ENCODE measurements at regions of chr20 and their contacts with region 1.

Region 1: DNA sequence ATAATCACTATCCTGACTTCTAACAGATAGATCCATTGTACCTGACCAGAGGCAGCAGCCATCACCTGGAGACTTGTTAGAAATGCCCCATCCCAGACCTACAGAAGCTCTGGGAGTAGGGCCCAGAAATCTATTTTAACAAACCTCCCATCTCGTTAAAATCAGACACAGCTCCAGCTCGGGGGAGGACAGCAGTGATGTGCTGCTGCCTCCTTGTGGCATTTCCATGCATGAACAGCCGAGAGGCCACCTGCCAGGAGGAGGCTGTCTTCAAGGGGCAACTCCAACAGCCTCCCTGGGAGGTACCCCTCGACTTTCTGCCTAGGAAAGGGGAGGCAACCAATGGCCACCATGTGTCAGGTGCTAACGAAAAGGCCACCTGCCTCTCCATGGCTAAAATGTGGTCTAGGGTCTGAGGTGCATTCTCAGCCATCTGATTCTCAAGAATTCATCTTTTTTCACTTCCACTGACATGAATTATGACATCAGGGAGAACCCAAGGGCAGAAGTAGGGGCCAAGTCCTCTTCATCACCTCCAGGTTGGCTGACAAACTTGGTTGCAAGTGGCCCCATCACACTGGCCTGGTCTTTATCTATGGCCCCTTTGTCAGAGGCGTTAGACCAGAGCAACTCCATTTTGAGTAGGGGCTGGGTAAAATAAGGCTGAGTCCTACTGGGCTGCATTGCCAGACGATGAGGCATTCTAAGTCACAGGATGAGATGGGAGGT is 12.2 kb upstream of the KCNK15 start:
- DNase-seq: no peak
- H3K4me3 ChIP-seq: no peak overlapping the region
- H3K27me3 ChIP-seq: no peaks in the 10 kb centered on the region
- CTCF ChIP-seq: peak; percentile 88

Region 2: GRCh38 chr20:44660581-44660980 is 72.9 kb before region 1 on chr20:
- CTCF ChIA-PET with region 1: no interaction called
- POLR2A ChIA-PET with region 1: no interaction called
- DNase-seq: no peak
- H3K4me3 ChIP-seq: no peak overlapping the region
- H3K27me3 ChIP-seq: peaks cover 5% of the 10 kb centered on the region
- CTCF ChIP-seq: no peak

Region 3: DNA sequence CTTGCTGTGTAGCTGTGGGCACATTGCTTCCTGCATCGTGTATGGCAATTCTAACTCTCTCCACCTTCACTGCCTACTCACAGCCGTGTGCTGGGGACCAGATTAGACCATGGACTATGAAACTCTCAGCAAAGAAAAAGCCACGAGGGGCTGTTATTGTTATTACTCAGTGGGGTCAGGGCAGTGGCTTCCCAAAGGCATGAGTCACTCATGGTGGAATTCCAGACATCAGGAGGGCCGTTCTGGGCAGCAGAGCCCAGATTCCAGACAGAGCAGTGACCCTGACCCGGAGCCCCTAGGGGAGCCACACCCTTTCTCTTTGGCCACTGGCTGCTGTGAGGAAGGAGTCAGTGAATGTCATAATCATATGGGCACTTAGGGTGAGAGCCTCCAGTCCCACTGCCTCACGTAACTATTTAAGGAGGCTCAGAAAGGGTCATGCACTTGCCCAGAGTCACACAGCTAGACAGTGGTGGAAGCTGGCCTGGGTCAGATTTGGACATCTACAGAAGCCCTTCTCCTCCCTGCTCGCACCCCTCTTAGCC is 40.5 kb before region 1 on chr20:
- CTCF ChIA-PET with region 1: interaction called, 269 read pairs
- POLR2A ChIA-PET with region 1: no interaction called
- DNase-seq: peak; percentile 89
- H3K4me3 ChIP-seq: no peak overlapping the region
- H3K27me3 ChIP-seq: no peaks in the 10 kb centered on the region
- CTCF ChIP-seq: no peak

Region 4: GRCh38 chr20:44702776-44703175 is 30.7 kb before region 1 on chr20:
- CTCF ChIA-PET with region 1: interaction called, 104 read pairs
- POLR2A ChIA-PET with region 1: no interaction called
- DNase-seq: peak; percentile 57
- H3K4me3 ChIP-seq: no peak overlapping the region
- H3K27me3 ChIP-seq: no peaks in the 10 kb centered on the region
- CTCF ChIP-seq: no peak

Region 5: GRCh38 chr20:44720617-44720993 is 12.9 kb before region 1 on chr20:
- CTCF ChIA-PET with region 1: interaction called, 10 read pairs
- POLR2A ChIA-PET with region 1: no interaction called
- DNase-seq: peak; percentile 35
- H3K4me3 ChIP-seq: no peak overlapping the region
- H3K27me3 ChIP-seq: no peaks in the 10 kb centered on the region
- CTCF ChIP-seq: no peak